Breast epithelium (tissue), 4 donors: ENCODE measurements at regions of chrX and their contacts with region 1.

Region 1: GRCh38 chrX:123153846-123154335 is 30.2 kb upstream of the GRIA3 start:
- DNase-seq: no peak
- H3K4me3 ChIP-seq: no peak overlapping the region
- H3K27ac ChIP-seq: no peak overlapping the region
- H3K4me1 ChIP-seq: no peaks in the 10 kb centered on the region
- H3K27me3 ChIP-seq: no peaks in the 10 kb centered on the region
- CTCF ChIP-seq: no peak
- POLR2A ChIP-seq: no peak

Region 2: GRCh38 chrX:122389005-122389404 is 764.9 kb before region 1 on chrX:
- intact Hi-C with region 1: loop called (anchors 10 kb)
- DNase-seq: no peak
- H3K4me3 ChIP-seq: no peak overlapping the region
- H3K27ac ChIP-seq: no peak overlapping the region
- H3K4me1 ChIP-seq: no peaks in the 10 kb centered on the region
- H3K27me3 ChIP-seq: no peaks in the 10 kb centered on the region
- CTCF ChIP-seq: no peak
- POLR2A ChIP-seq: no peak

Region 3: DNA sequence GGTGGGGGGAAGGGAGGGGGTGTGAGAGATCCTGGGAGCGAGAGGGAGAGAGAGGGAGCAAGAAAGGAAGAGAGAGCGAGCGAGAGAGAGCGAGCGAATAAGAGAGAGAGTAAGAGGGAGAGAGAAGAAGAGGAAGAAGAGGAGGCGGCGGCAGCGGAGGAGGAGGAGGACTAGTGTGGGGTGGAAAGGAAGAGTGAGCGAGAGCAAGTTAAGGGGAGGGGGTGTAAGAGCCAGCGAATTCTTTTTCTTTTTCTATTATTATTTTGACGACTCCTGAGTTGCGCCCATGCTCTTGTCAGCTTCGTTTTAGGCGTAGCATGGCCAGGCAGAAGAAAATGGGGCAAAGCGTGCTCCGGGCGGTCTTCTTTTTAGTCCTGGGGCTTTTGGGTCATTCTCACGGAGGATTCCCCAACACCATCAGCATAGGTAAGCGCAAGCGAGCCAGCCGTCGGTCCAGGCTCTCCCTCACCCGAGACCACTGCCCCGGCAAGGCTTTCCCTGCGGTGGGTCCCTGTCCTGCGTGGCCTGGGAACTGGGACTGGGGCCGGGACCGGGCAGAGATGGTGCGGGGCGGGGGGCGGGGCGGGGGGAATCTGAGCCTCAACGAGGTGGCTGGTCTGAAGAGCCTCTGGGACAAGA is 30.4 kb after region 1 on chrX and contains the start of gene GRIA3:
- intact Hi-C with region 1: no loop called
- DNase-seq: no peak
- H3K4me3 ChIP-seq: peak within 1 kb of the TSS; percentile 42 to 65 (median 48)
- H3K27ac ChIP-seq: no peak within 1 kb of the TSS
- H3K4me1 ChIP-seq: no peaks in the 10 kb centered on the region
- H3K27me3 ChIP-seq: peaks cover 0 to 27% of the 10 kb centered on the region in 2 donors
- CTCF ChIP-seq: no peak
- POLR2A ChIP-seq: no peak
- total RNA-seq, gene GRIA3: 0.98 to 2.6 (median 1.9) TPM

Region 4: GRCh38 chrX:123481913-123482851 is 328.3 kb after region 1 on chrX:
- intact Hi-C with region 1: no loop called
- DNase-seq: no peak
- H3K4me3 ChIP-seq: no peak overlapping the region
- H3K27ac ChIP-seq: peak overlapping the region in 1 of 2 donors; percentile 43
- H3K4me1 ChIP-seq: no peaks in the 10 kb centered on the region
- H3K27me3 ChIP-seq: no peaks in the 10 kb centered on the region
- CTCF ChIP-seq: no peak
- POLR2A ChIP-seq: no peak